Activated T-helper 1 cell treated with anti-CD3 and anti-CD28 coated beads, Interleukin-12 subunit alpha, Interleukin-12 subunit beta, Interleukin-2, Interleukin-4 antibody, amounts not matched to agents 30 ng/mL and 10 ng/mL and 1 ng/mL, durations not matched to agents 14 hours and 24 hours and 36 hours (primary cell): ENCODE measurements at regions of chr19 and their contacts with region 1.

Region 1: DNA sequence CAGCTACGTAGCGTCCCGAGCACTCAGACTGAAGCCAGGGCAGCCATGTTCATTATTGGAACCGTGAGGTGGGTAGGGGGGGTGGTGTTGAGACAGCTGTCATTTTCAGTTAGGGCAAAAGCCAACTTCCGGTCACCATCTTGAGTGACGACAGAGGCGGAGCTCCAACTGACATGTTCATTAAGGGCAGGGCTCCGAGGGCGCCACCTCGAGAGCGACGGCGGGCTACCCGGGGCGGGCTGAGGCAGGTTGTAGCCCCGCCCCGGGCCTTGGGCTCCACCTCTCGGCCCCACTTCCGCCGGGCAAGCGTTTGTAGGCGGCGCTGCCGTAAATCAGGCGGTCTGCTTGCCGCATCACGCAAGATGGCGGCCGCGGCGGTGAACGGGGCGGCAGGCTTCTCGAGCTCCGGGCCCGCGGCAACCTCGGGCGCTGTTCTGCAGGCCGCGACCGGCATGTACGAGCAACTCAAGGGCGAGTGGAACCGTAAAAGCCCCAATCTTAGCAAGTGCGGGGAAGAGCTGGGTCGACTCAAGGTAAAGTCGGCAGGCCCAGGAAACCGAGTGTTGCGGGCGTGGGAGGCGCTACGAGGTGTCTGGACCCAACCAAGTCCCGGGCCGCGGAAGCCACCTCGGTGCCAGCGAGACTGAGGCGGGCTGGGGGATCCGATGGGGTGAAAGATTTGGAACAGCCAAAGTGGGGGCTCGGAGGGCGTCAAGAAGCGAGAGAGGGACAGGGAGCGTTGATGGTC is at the start of gene PSMD8:
- DNase-seq: peak; percentile 98
- H3K4me3 Mint-ChIP-seq: peak within 1 kb of the TSS; percentile 100
- H3K27ac Mint-ChIP-seq: peak within 1 kb of the TSS; percentile 99
- H3K4me1 Mint-ChIP-seq: peaks cover 31% of the 10 kb centered on the region
- H3K27me3 Mint-ChIP-seq: peaks cover 3% of the 10 kb centered on the region
- total RNA-seq, gene PSMD8: 292 and 298 TPM in 2 replicates

Region 2: GRCh38 chr19:38245826-38246498 is 128.6 kb before region 1 on chr19:
- intact Hi-C with region 1: loop called (anchors 1 kb)
- DNase-seq: no peak
- H3K4me3 Mint-ChIP-seq: no peak overlapping the region
- H3K27ac Mint-ChIP-seq: no peak overlapping the region
- H3K4me1 Mint-ChIP-seq: peaks cover 10% of the 10 kb centered on the region
- H3K27me3 Mint-ChIP-seq: no peaks in the 10 kb centered on the region

Region 3: DNA sequence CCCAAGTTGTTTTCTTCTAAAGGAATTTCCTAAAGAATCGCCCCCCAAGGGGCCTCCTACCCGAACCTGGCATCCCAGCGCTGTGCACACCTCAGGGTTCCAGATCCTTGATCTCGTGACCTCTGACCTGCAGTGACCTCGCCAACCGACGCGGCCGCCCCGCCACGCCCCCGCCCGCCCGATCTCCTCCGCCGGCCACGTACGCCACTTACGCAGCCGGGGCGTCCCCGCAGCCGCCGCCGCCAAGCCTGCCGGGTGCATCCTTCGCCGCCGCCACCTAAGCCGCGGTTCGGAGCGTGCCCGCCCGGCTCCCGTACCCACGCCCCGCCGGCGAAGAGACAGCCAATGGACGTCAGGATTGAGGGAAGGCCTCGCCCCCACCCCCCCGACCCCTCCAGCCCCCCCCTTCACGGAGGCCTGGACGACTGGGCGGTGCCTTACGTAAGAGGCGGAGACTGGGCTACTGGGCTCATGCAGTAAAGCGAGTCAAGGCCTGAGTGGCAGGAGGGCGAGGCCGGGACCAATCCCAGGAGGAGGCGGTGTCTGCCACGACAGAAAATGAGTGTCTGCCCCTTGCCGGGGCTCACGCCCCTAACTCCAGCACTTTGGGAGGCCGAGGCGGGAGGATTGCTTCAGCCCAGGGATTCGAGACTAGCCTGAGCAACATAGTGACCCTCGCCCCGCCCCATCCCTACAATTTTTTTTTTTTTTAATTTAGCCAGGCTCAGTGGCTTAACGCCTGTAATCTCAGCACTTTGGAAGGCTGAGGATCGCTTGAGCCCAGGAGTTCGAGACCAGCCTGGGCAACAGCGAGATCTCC is 58.7 kb before region 1 on chr19 and contains the start of gene YIF1B:
- intact Hi-C with region 1: loop called (anchors 1 kb)
- DNase-seq: peak; percentile 94
- H3K4me3 Mint-ChIP-seq: peak within 1 kb of the TSS; percentile 85
- H3K27ac Mint-ChIP-seq: peak within 1 kb of the TSS; percentile 96
- H3K4me1 Mint-ChIP-seq: peaks cover 46% of the 10 kb centered on the region
- H3K27me3 Mint-ChIP-seq: no peaks in the 10 kb centered on the region
- total RNA-seq, gene YIF1B: 89.8 and 96.0 TPM in 2 replicates

Region 4: GRCh38 chr19:38387550-38388348 is 13.1 kb after region 1 on chr19 and contains the start of gene GGN:
- intact Hi-C with region 1: loop called (anchors 1 kb)
- DNase-seq: peak; percentile 73
- H3K4me3 Mint-ChIP-seq: peak within 1 kb of the TSS; percentile 89
- H3K27ac Mint-ChIP-seq: peak within 1 kb of the TSS; percentile 91
- H3K4me1 Mint-ChIP-seq: peaks cover 16% of the 10 kb centered on the region
- H3K27me3 Mint-ChIP-seq: peaks cover 21% of the 10 kb centered on the region
- total RNA-seq, gene GGN: 0.17 and 0.39 TPM in 2 replicates

Region 5: GRCh38 chr19:38506723-38507550 is 132.3 kb after region 1 on chr19:
- intact Hi-C with region 1: loop called (anchors 1 kb)
- DNase-seq: peak; percentile 84
- H3K4me3 Mint-ChIP-seq: no peak overlapping the region
- H3K27ac Mint-ChIP-seq: no peak overlapping the region
- H3K4me1 Mint-ChIP-seq: no peaks in the 10 kb centered on the region
- H3K27me3 Mint-ChIP-seq: peaks cover 13% of the 10 kb centered on the region